WTC11 (cell line): ENCODE measurements at regions of chr19 and their contacts with region 1.

Region 1: DNA sequence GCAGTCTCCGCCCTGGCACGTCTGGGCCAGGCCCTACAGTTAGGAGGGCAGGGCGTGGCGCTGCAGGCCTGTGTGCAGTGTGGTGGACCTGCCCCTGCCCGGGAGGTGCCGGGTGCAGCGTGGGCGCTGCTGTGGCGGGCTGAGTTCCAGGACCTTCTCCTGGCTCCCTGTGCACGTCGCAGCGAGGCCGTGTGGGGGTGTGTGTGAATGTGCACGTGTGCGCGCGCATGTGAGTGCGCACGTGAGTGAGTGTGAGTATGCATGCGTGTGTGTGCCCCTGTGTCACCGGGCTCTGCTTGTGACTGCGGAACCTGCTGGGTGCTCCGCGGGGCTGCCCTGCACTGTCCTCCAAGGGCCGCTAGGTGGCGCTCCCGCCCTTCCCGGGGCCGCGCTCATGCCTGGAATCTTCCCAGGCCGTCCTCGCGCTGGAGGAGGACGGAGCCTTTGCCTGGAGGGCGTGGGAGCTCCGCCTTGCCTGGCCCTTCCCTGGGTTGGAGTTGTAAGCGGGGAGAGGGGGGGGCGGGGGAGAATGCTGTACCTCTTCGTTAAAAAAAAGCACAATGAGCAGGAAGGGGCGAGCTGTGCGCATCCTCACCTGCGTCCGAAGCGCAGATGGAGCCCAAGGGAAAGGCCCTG is 79.3 kb downstream of the KDM4B start:
- DNase-seq: peak; percentile 92
- ATAC-seq: peak; percentile 88
- H3K4me3 Mint-ChIP-seq: no peak overlapping the region
- H3K27ac Mint-ChIP-seq: no peak overlapping the region
- H3K4me1 Mint-ChIP-seq: no peaks in the 10 kb centered on the region
- H3K27me3 Mint-ChIP-seq: no peaks in the 10 kb centered on the region
- CTCF ChIP-seq: peak; percentile 99

Region 2: DNA sequence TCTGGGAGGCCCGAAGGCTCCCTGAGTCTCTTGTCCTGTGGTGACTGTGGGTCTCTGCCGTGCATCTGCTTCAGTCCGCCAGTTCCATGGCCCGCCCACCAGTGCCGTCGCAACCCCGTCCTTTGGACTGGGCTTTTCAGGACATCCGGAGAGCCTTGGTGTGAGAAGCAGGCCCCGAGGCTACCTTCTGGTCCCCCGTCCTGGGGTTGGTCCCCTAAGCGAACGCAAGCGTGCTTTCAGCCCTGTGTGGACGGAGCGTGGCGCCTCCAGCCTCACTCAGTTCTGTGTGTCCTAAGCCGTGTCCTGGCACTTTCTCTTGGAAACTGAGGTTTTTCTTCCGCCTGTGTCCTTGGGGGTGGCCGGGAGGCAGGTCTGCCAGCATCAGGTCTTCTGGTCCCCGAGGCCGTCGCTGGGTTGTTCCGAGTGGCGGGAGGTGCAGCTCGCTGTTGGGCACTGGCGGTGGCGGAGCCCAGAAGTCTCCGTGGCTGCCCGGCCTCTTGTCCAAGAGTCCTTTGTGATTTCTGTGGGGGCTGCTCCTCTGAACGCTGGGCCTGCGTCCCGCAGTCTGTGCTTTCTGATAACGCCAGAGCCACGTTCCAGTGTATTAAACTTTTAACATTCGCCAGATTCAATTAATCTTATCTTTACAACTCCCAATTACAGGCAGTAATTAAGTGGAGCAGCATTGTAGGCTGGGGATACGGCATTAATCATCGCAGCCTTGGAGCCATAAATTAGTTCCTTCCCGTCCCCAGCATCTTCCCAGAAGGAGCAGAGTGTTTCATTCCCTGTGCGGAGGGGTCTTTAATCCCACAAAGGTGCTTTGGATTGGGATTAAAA is 20.2 kb after region 1 on chr19:
- CTCF ChIA-PET with region 1: interaction called, 12 read pairs
- POLR2A ChIA-PET with region 1: no interaction called
- DNase-seq: no peak
- ATAC-seq: no peak
- H3K4me3 Mint-ChIP-seq: no peak overlapping the region
- H3K27ac Mint-ChIP-seq: peak overlapping the region; percentile 12
- H3K4me1 Mint-ChIP-seq: peaks cover 21% of the 10 kb centered on the region
- H3K27me3 Mint-ChIP-seq: no peaks in the 10 kb centered on the region
- CTCF ChIP-seq: no peak

Region 3: DNA sequence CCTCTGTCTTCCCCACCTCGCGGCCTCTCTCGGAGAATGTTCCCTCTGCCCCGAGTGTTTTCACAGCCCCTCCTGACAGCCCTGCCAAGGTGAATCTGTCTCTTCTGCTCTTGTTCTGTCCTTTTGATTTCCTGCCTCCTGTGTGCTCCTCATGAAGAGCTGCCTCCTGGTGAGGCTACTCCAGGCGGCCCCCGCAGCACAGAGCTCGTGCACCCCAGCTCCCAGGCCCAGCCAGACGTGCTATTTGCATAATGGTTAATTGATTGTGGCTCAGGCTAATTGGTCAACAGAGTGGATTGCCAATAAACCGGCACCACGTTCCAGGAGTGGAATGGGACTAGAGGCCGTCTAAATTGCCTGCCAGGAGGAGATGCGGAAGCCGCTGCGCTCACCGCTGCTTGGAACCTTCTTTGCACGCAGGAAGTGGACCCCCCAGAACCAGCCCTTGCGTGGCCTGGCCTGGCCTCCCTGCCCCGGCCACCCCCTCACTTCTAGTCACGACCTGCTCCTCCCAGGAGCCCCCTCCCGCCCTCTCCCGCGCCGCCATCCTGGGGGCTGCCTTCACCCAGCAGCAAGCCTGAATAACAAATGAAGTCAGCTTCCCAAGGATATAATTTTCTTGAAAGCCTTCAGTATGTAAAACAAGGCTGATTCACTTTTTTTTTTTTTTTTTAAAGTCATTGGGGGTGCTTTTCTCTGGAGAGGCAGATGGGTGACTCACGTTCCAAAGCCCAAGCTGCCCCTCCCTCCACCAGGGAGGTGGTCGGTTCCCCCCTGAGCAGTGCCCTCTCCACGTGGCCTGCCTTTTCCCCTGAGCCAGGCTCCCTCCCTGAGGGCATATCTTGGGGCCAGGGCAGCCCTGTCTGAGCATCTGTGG is 64.7 kb after region 1 on chr19:
- CTCF ChIA-PET with region 1: interaction called, 39 read pairs
- POLR2A ChIA-PET with region 1: no interaction called
- DNase-seq: no peak
- ATAC-seq: no peak
- H3K4me3 Mint-ChIP-seq: no peak overlapping the region
- H3K27ac Mint-ChIP-seq: peak overlapping the region; percentile 83
- H3K4me1 Mint-ChIP-seq: peaks cover 30% of the 10 kb centered on the region
- H3K27me3 Mint-ChIP-seq: no peaks in the 10 kb centered on the region
- CTCF ChIP-seq: no peak

Region 4: DNA sequence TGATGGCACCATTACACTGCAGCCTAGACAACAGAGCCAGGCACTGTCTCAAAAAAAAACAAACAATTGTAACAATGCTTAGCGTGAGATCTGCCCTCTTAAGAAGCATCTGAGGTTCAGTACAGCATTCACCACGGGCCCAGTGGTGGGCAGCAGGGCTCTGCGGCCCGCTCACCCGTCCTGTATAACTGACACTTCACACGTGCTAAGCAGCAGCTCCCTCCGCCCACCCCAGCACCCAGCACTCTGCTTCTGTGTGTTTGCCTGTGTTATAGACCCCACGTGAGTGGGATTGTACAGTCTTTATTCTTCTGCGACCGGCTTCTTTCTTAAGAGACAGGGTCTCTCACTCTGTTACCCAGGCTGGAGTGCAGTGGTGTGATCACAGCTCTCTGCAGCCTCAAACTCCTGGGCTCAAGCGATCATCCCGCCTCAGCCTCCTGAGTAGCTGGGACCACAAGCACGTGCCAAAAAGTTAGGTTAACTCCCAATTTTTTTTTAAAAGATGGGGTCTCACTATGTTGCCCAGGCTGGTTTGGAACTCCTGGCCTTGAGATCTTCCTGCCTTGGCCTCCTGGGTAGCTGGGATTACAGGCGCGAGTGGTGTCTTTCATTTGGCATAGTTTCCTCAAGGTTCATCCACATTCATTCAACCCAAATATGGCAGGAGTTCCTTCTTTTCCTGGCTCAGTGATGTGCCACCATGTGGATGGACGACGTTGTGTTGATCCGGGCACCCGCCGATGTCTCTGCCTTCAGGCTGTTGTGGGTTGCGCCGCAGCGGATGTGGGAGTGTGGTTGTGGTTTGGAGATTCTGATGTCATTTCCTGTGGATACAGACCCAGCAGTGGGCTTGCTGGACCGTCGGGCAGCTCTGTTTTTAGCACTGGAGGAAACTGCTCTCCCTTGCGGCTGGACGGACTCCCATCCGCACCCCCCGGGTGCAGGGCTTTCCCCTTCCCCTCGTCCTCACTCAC is 90.7 kb after region 1 on chr19:
- CTCF ChIA-PET with region 1: interaction called, 46 read pairs
- POLR2A ChIA-PET with region 1: no interaction called
- DNase-seq: no peak
- ATAC-seq: no peak
- H3K4me3 Mint-ChIP-seq: no peak overlapping the region
- H3K27ac Mint-ChIP-seq: no peak overlapping the region
- H3K4me1 Mint-ChIP-seq: no peaks in the 10 kb centered on the region
- H3K27me3 Mint-ChIP-seq: no peaks in the 10 kb centered on the region
- CTCF ChIP-seq: no peak

Region 5: GRCh38 chr19:5154129-5154798 is 106.1 kb after region 1 on chr19:
- CTCF ChIA-PET with region 1: interaction called, 32 read pairs
- POLR2A ChIA-PET with region 1: no interaction called
- DNase-seq: peak; percentile 90
- ATAC-seq: peak; percentile 87
- H3K4me3 Mint-ChIP-seq: no peak overlapping the region
- H3K27ac Mint-ChIP-seq: no peak overlapping the region
- H3K4me1 Mint-ChIP-seq: peaks cover 13% of the 10 kb centered on the region
- H3K27me3 Mint-ChIP-seq: peaks cover 5% of the 10 kb centered on the region
- CTCF ChIP-seq: peak; percentile 63